B cell (primary cell): ENCODE measurements at regions of chr6 and their contacts with region 1.

Region 1: GRCh38 chr6:116461932-116462885 is 1.0 kb downstream of the CALHM6 start:
- DNase-seq: peak; percentile 86
- ATAC-seq: peak; percentile 76
- H3K4me3 ChIP-seq: peak overlapping the region; percentile 30 to 91 (median 71)
- H3K4me3 Mint-ChIP-seq: peak overlapping the region; percentile 93
- H3K27ac ChIP-seq: peak overlapping the region; percentile 86 to 91
- H3K27ac Mint-ChIP-seq: peak overlapping the region; percentile 96
- H3K4me1 ChIP-seq: peaks cover 49 to 50% of the 10 kb centered on the region in 2 donors
- H3K4me1 Mint-ChIP-seq: peaks cover 54% of the 10 kb centered on the region
- H3K27me3 ChIP-seq: no peaks in the 10 kb centered on the region
- H3K27me3 Mint-ChIP-seq: no peaks in the 10 kb centered on the region
- CTCF ChIP-seq: no peak

Region 2: DNA sequence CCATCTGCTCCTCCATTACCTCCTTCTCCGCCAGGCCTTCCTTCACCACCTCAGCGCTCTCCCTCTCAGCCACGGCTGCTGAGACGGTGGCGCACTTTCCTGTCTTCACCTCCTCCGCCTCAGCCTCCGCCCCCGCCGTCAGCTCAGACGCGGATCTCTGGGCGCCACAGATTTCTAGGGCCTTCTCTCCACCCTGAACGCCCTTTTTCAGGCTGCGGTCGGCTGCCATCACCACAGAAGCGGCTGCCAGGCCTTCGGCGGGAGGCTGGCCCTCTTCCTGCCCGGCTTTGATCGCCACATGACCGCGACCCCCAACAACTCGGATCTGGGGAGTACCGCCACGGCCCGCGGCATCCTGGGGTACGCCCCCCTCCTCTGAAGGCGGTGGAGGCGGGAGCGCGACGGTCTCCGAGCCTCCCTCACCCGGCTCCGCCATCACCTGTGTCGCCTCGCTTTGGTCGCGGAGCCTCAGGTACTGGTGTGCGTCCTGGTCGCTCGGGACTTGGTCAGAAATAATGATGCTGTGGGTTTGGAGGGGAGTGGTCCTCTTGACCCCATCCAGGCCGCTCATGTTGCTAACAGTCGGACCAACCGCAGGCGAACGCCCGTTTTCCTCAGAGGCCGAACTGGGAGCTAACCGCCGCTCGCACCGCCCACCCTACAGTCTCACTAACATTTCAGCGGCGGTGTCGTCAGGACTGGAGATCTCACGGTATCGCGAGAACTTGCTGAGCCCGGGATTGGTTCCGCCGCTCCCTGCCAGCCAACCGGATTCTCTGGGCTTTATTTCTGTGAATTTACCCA is 182.7 kb before region 1 on chr6 and contains the start of gene TSPYL1:
- CTCF ChIA-PET with region 1: interaction called, 3 read pairs
- POLR2A ChIA-PET with region 1: interaction called, 3 read pairs
- intact Hi-C with region 1: loop called (anchors 2 kb)
- DNase-seq: peak; percentile 98
- ATAC-seq: peak; percentile 88
- H3K4me3 ChIP-seq: peak within 1 kb of the TSS; percentile 89 to 96 (median 94)
- H3K4me3 Mint-ChIP-seq: peak within 1 kb of the TSS; percentile 97
- H3K27ac ChIP-seq: peak within 1 kb of the TSS; percentile 99
- H3K27ac Mint-ChIP-seq: peak within 1 kb of the TSS; percentile 100
- H3K4me1 ChIP-seq: peaks cover 41 to 48% of the 10 kb centered on the region in 2 donors
- H3K4me1 Mint-ChIP-seq: peaks cover 60% of the 10 kb centered on the region
- H3K27me3 ChIP-seq: no peaks in the 10 kb centered on the region
- H3K27me3 Mint-ChIP-seq: no peaks in the 10 kb centered on the region
- CTCF ChIP-seq: no peak
- total RNA-seq, gene TSPYL1: 98.9 and 101 TPM in 2 replicates

Region 3: DNA sequence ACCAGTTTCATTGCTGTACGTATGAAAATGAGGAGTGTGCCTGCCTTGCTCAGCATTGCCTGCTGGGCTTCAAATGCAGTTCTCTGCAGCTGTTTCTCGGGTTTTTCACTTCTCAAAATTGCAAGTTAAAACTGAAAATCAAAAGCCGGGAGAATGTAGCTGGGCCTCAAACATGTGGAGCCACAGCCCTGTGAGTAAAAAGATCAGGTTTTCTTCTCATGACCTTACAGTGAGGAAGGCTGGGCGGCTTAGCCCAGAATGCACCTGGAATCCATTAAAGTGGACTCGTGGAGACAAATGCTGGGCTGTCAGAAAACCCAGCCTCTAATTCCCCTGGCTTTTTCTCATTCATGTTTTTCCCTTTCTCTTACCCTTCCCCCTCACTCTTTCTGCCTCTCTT is 57.1 kb before region 1 on chr6:
- CTCF ChIA-PET with region 1: interaction called, 3 read pairs
- POLR2A ChIA-PET with region 1: interaction called, 5 read pairs
- intact Hi-C with region 1: loop called (anchors 2 kb)
- DNase-seq: peak; percentile 71
- ATAC-seq: peak; percentile 53
- H3K4me3 ChIP-seq: peak overlapping the region in 3 of 5 experiments; percentile 14 to 42 (median 18)
- H3K4me3 Mint-ChIP-seq: peak overlapping the region; percentile 61
- H3K27ac ChIP-seq: peak overlapping the region; percentile 70 to 84
- H3K27ac Mint-ChIP-seq: peak overlapping the region; percentile 96
- H3K4me1 ChIP-seq: peaks cover 58 to 60% of the 10 kb centered on the region in 2 donors
- H3K4me1 Mint-ChIP-seq: peaks cover 53% of the 10 kb centered on the region
- H3K27me3 ChIP-seq: no peaks in the 10 kb centered on the region
- H3K27me3 Mint-ChIP-seq: no peaks in the 10 kb centered on the region
- CTCF ChIP-seq: no peak

Region 4: GRCh38 chr6:116450769-116451740 is 11.2 kb before region 1 on chr6:
- CTCF ChIA-PET with region 1: interaction called, 9 read pairs
- POLR2A ChIA-PET with region 1: interaction called, 6 read pairs
- intact Hi-C with region 1: loop called (anchors 1 kb)
- DNase-seq: peak; percentile 69
- ATAC-seq: peak; percentile 88
- H3K4me3 ChIP-seq: no peak overlapping the region
- H3K4me3 Mint-ChIP-seq: peak overlapping the region; percentile 54
- H3K27ac ChIP-seq: no peak overlapping the region
- H3K27ac Mint-ChIP-seq: peak overlapping the region; percentile 76
- H3K4me1 ChIP-seq: peaks cover 15 to 19% of the 10 kb centered on the region in 2 donors
- H3K4me1 Mint-ChIP-seq: peaks cover 33% of the 10 kb centered on the region
- H3K27me3 ChIP-seq: no peaks in the 10 kb centered on the region
- H3K27me3 Mint-ChIP-seq: no peaks in the 10 kb centered on the region
- CTCF ChIP-seq: no peak

Region 5: DNA sequence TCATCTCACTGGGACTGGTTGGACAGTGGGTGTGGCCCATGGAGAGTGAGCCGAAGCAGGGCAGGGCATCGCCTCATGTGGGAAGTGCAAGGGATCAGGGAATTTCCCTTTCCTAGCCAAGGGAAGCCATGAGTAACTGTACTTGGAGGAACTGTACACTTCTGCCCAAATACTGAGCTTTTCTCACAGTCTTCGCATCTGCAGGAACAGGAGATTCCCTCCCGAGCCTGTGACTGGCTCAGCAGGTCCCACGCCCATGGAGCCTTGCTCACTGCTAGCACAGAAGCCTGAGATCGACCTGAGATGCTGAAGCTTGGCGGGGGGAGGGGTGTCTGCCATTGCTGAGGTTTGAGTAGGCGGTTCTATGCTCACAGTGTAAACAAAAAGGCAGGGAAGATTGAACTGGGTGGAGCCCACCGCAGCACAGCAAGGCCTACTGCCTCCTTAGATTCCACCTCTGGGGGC is 38.8 kb after region 1 on chr6:
- CTCF ChIA-PET with region 1: no interaction called
- POLR2A ChIA-PET with region 1: no interaction called
- intact Hi-C with region 1: no loop called
- DNase-seq: no peak
- ATAC-seq: no peak
- H3K4me3 ChIP-seq: no peak overlapping the region
- H3K4me3 Mint-ChIP-seq: no peak overlapping the region
- H3K27ac ChIP-seq: no peak overlapping the region
- H3K27ac Mint-ChIP-seq: no peak overlapping the region
- H3K4me1 ChIP-seq: no peaks in the 10 kb centered on the region
- H3K4me1 Mint-ChIP-seq: peaks cover 8% of the 10 kb centered on the region
- H3K27me3 ChIP-seq: no peaks in the 10 kb centered on the region
- H3K27me3 Mint-ChIP-seq: peaks cover 4% of the 10 kb centered on the region
- CTCF ChIP-seq: no peak

Region 6: DNA sequence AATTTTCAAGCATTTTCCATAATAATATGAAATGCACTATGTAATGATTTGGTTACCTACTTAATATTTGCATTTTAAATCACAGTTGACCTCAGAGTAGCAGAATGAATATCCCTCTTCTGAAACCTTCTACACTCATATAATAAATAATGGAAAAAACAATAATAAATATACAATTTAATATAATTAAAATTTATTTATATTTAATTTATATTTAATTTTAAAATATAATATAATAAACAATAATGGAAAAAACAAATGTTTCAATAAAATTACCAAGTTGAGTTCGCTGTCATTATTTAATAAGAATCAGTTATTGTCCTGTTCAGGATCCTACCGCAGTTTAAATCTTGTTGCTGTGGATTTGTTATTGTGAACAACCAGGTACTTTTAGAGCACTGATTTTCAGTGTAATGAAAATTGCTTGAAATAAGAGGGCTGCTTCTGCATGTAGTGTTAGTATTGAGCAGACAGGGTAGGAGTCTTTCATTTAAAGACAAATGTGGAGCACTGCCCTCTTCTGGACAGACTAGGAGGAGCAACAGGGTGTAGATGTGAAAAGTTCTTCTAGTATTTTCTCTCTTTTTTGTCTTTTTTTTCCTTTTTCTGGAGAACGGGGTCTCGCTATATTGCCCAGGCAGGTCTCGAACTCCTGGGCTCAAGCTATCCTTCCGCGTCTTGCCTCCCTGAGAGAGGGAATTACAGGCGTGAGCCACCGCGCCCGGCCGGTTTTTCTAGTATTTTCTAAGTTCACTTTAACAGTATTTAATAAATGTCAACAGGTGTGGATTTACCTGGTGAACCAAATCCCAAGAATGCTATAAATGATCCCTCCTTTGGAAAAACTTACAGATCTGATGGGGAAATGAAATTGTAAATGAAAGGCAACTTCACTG is 69.7 kb after region 1 on chr6:
- CTCF ChIA-PET with region 1: interaction called, 9 read pairs
- POLR2A ChIA-PET with region 1: no interaction called
- intact Hi-C with region 1: loop called (anchors 5 kb)
- DNase-seq: peak; percentile 82
- ATAC-seq: peak; percentile 98
- H3K4me3 ChIP-seq: no peak overlapping the region
- H3K4me3 Mint-ChIP-seq: no peak overlapping the region
- H3K27ac ChIP-seq: no peak overlapping the region
- H3K27ac Mint-ChIP-seq: no peak overlapping the region
- H3K4me1 ChIP-seq: peaks cover 0 to 5% of the 10 kb centered on the region in 2 donors
- H3K4me1 Mint-ChIP-seq: peaks cover 11% of the 10 kb centered on the region
- H3K27me3 ChIP-seq: no peaks in the 10 kb centered on the region
- H3K27me3 Mint-ChIP-seq: peaks cover 3% of the 10 kb centered on the region
- CTCF ChIP-seq: peak; percentile 90

Region 7: DNA sequence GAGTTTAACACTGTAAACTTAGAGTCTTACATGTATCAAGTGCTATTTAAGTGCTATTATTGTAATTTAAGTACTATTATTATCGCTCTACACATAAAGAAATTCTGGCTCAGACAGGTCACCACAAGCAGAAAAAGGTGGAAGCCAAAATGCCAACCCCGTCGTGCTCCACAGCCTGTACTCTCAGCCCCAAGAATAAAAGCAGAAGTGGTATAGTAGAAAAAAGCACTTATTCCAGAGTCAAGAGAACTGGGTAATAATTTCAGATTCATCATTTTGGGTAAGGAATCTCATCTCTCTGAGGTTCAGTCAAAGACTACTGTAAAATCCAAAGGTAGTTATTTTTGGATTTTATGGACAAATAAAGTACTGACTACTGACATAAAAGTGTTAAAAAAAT is 205.4 kb after region 1 on chr6:
- CTCF ChIA-PET with region 1: no interaction called
- POLR2A ChIA-PET with region 1: no interaction called
- intact Hi-C with region 1: loop called (anchors 5 kb)
- DNase-seq: peak; percentile 76
- ATAC-seq: peak; percentile 52
- H3K4me3 ChIP-seq: peak overlapping the region; percentile 73 to 96 (median 91)
- H3K4me3 Mint-ChIP-seq: peak overlapping the region; percentile 100
- H3K27ac ChIP-seq: peak overlapping the region; percentile 88 to 92
- H3K27ac Mint-ChIP-seq: peak overlapping the region; percentile 61
- H3K4me1 ChIP-seq: peaks cover 15 to 26% of the 10 kb centered on the region in 2 donors
- H3K4me1 Mint-ChIP-seq: peaks cover 36% of the 10 kb centered on the region
- H3K27me3 ChIP-seq: no peaks in the 10 kb centered on the region
- H3K27me3 Mint-ChIP-seq: peaks cover 11% of the 10 kb centered on the region
- CTCF ChIP-seq: no peak

Region 8: GRCh38 chr6:116859264-116859663 is 397.1 kb after region 1 on chr6:
- CTCF ChIA-PET with region 1: no interaction called
- POLR2A ChIA-PET with region 1: no interaction called
- intact Hi-C with region 1: no loop called
- DNase-seq: no peak
- ATAC-seq: no peak
- H3K4me3 ChIP-seq: no peak overlapping the region
- H3K4me3 Mint-ChIP-seq: no peak overlapping the region
- H3K27ac ChIP-seq: no peak overlapping the region
- H3K27ac Mint-ChIP-seq: no peak overlapping the region
- H3K4me1 ChIP-seq: no peaks in the 10 kb centered on the region
- H3K4me1 Mint-ChIP-seq: no peaks in the 10 kb centered on the region
- H3K27me3 ChIP-seq: no peaks in the 10 kb centered on the region
- H3K27me3 Mint-ChIP-seq: no peaks in the 10 kb centered on the region
- CTCF ChIP-seq: no peak